ENCODE measurements at regions of chr12 and their contacts with region 1.

Region 1: DNA sequence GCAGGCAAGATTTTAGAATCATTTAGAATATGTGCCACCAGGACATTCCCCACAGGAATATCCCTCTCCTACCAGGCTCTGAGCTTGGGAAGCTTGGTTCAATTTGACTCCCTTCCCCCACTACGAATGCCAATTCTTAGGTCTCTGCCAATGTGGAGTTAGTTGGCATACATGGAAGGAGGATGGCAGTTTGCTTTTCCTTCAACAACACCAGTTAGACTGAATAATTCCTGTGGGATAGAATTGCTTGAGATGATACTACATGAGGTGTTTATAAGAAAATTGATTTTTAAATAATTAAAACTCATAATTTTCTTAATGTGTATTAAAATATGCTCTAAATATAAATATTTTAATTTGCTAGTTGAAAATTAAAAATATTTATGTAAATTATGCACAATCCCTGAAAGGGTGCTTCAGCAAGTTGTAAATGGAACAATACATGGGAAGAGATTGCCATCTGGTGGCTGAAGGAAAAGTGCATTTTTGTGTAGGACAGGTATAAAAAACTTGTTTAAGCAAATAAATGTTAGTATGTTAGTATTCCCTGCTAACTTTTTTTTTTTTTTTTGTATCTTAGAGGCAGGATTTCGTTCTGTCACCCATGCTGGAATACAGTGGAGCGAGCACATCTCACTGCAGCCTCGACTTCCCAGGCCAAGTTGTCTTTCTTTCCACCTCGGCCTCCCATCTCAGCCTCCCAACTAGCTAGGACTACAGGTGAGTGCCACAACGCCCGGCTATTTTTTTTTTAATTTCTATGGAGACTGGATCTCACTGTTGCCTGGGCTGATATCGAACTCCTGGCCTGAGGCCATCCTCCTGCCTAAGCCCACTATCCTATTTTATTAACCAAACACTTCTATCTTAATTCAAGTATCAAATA is 25.8 kb upstream of the STRAP start:
- DNase-seq: no peak
- H3K4me3 ChIP-seq: no peak overlapping the region
- H3K27ac ChIP-seq: peak overlapping the region; percentile 42
- H3K4me1 ChIP-seq: no peaks in the 10 kb centered on the region
- H3K27me3 ChIP-seq: no peaks in the 10 kb centered on the region
- CTCF ChIP-seq: peak; percentile 74 to 91 (median 88)
- POLR2A ChIP-seq: no peak

Region 2: GRCh38 chr12:15220994-15221885 is 635.1 kb before region 1 on chr12 and contains the start of gene RERG:
- intact Hi-C with region 1: loop called (anchors 5 kb)
- DNase-seq: peak in 1 of 2 donors; percentile 93
- H3K4me3 ChIP-seq: peak within 1 kb of the TSS; percentile 60 to 61
- H3K27ac ChIP-seq: peak within 1 kb of the TSS; percentile 83
- H3K4me1 ChIP-seq: peaks cover 21% of the 10 kb centered on the region
- H3K27me3 ChIP-seq: no peaks in the 10 kb centered on the region
- CTCF ChIP-seq: peak; percentile 78 to 98 (median 95)
- POLR2A ChIP-seq: peak in 1 of 2 donors; percentile 16
- total RNA-seq, gene RERG: 31.9 TPM

Region 3: GRCh38 chr12:15590180-15590826 is 266.0 kb before region 1 on chr12:
- intact Hi-C with region 1: loop called (anchors 2 kb)
- DNase-seq: no peak
- H3K4me3 ChIP-seq: peak overlapping the region; percentile 22 to 32
- H3K27ac ChIP-seq: peak overlapping the region; percentile 5
- H3K4me1 ChIP-seq: peaks cover 4% of the 10 kb centered on the region
- H3K27me3 ChIP-seq: no peaks in the 10 kb centered on the region
- CTCF ChIP-seq: peak; percentile 75 to 84 (median 83)
- POLR2A ChIP-seq: no peak